Caco-2 (cell line): ENCODE measurements at regions of chrX and their contacts with region 1.

Region 1: GRCh38 chrX:72554448-72555140 is 18.0 kb downstream of the HDAC8 start:
- DNase-seq: peak; percentile 86 to 90
- H3K4me3 ChIP-seq: peak overlapping the region; percentile 28
- H3K4me3 Mint-ChIP-seq: peak overlapping the region; percentile 79
- H3K27ac Mint-ChIP-seq: peak overlapping the region; percentile 92
- H3K4me1 ChIP-seq: 0 out of 2 replicates have a peak, but pooled peaks cover 5% of the 10 kb centered on the region
- H3K4me1 Mint-ChIP-seq: peaks cover 9% of the 10 kb centered on the region
- H3K27me3 ChIP-seq: no peaks in the 10 kb centered on the region
- H3K27me3 Mint-ChIP-seq: no peaks in the 10 kb centered on the region
- CTCF ChIP-seq: peak; percentile 46 to 48

Region 2: DNA sequence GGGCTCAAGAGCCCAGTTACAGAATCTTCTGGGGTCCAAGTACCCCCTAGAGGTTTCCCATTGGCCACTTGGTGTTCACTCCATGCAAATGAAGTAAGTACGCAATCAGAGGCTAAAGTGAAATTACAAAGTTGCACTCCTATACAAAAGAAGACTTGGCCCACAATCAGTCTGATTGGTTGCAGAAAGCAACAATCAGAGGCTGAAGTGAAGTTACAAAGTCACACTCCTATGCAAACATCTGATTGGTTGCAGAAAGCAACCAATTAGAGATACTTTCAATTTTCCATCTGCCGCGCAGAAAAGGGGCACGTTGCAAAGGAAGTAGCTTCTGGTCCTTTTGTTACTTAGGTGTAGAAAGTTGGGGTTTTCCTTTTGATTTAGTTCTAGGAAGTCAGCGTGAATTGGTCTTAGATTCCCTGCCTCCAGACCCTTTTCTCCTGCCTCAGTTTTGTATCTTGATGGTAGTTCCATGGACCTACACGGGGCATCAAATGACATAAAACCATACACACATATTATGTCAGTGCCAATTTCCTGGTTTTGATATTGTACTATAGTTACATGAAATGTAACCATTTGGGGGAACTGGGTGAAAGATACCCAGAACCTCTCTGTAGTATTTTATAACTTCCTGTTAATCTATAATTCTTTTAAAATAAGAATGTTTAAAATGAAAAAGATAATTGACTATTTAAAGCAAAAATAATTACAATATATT is 385.4 kb before region 1 on chrX:
- CTCF ChIA-PET with region 1: no interaction called
- POLR2A ChIA-PET with region 1: no interaction called
- intact Hi-C with region 1: no loop called
- DNase-seq: no peak
- H3K4me3 ChIP-seq: no peak overlapping the region
- H3K4me3 Mint-ChIP-seq: no peak overlapping the region
- H3K27ac Mint-ChIP-seq: no peak overlapping the region
- H3K4me1 ChIP-seq: no peaks in the 10 kb centered on the region
- H3K4me1 Mint-ChIP-seq: no peaks in the 10 kb centered on the region
- H3K27me3 ChIP-seq: no peaks in the 10 kb centered on the region
- H3K27me3 Mint-ChIP-seq: no peaks in the 10 kb centered on the region
- CTCF ChIP-seq: no peak

Region 3: GRCh38 chrX:72306851-72307645 is 247.5 kb before region 1 on chrX:
- CTCF ChIA-PET with region 1: no interaction called
- POLR2A ChIA-PET with region 1: no interaction called
- intact Hi-C with region 1: loop called (anchors 5 kb)
- DNase-seq: peak; percentile 45 to 51
- H3K4me3 ChIP-seq: peak overlapping the region; percentile 57
- H3K4me3 Mint-ChIP-seq: peak overlapping the region; percentile 82
- H3K27ac Mint-ChIP-seq: no peak overlapping the region
- H3K4me1 ChIP-seq: no peaks in the 10 kb centered on the region
- H3K4me1 Mint-ChIP-seq: no peaks in the 10 kb centered on the region
- H3K27me3 ChIP-seq: peaks cover 1% of the 10 kb centered on the region
- H3K27me3 Mint-ChIP-seq: peaks cover 14% of the 10 kb centered on the region
- CTCF ChIP-seq: no peak

Region 4: GRCh38 chrX:72477781-72478181 is 76.8 kb before region 1 on chrX:
- CTCF ChIA-PET with region 1: no interaction called
- POLR2A ChIA-PET with region 1: no interaction called
- intact Hi-C with region 1: loop called (anchors 10 kb)
- DNase-seq: no peak
- H3K4me3 ChIP-seq: no peak overlapping the region
- H3K4me3 Mint-ChIP-seq: no peak overlapping the region
- H3K27ac Mint-ChIP-seq: no peak overlapping the region
- H3K4me1 ChIP-seq: peaks cover 13% of the 10 kb centered on the region
- H3K4me1 Mint-ChIP-seq: peaks cover 13% of the 10 kb centered on the region
- H3K27me3 ChIP-seq: no peaks in the 10 kb centered on the region
- H3K27me3 Mint-ChIP-seq: no peaks in the 10 kb centered on the region
- CTCF ChIP-seq: no peak

Region 5: DNA sequence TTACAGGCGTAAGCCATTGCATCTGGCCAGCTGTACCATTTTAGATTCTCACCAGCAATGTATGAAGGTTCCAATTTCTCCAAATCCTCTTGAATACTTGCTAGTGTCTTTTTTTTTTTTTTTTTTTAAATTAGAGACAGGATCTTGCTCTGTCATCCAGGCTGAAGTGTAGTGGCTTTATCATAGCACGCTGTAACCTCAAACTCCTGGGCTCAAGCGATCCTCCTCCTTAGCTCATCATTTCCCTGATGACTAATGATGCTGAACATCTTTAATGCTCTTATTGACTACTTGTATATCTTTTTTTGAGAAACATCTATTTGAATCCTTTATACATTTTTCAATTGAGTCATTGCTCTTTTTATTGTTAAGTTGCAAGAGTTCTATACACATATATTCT is 22.2 kb before region 1 on chrX:
- CTCF ChIA-PET with region 1: no interaction called
- POLR2A ChIA-PET with region 1: no interaction called
- intact Hi-C with region 1: no loop called
- DNase-seq: no peak
- H3K4me3 ChIP-seq: no peak overlapping the region
- H3K4me3 Mint-ChIP-seq: no peak overlapping the region
- H3K27ac Mint-ChIP-seq: no peak overlapping the region
- H3K4me1 ChIP-seq: no peaks in the 10 kb centered on the region
- H3K4me1 Mint-ChIP-seq: no peaks in the 10 kb centered on the region
- H3K27me3 ChIP-seq: no peaks in the 10 kb centered on the region
- H3K27me3 Mint-ChIP-seq: no peaks in the 10 kb centered on the region
- CTCF ChIP-seq: no peak

Region 6: DNA sequence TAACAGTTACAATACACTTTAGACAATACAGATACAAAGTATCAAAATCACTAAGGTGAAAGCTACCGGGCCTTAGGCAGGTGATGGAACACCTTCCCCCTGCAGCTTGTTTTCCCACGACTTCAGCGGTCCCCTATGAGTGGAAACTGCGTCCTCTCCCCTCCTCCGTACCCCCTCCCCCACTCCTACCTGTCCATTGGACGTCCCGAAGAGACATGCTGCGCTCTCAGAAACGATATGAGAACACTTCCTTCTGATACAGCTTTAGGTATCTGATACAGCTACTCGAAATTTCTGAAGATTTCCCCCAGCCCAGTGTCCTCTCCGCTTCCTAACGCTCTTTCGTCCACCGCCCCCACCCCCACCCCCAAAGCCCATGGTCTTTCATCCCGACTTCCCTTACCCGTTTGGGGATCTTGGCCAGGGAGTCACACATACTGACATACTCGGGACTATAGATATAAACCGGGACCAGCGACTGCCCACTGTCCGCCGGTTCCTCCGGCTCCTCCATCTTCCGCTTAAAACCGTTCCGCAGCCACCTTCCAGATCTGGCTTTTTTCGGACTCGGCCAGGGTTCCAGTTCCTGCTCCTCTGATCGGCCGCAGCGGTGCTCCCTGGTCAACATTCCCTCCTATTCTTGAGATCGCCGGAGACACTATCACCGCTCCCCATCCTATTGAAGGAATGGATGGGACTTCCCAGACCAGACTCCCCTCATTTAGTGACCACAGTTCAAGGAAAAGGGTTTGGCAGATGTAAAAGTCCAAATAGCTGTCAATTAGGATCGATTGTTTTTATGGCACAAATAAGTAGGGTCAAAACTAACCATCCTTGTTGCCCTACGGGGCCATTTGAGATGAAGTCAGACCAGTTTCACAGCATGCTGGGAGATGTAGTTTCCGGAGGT is 17.9 kb after region 1 on chrX and contains the start of gene HDAC8:
- CTCF ChIA-PET with region 1: interaction called, 4 read pairs
- POLR2A ChIA-PET with region 1: no interaction called
- intact Hi-C with region 1: loop called (anchors 1 kb)
- DNase-seq: peak; percentile 53 to 62
- H3K4me3 ChIP-seq: peak within 1 kb of the TSS; percentile 50
- H3K4me3 Mint-ChIP-seq: peak within 1 kb of the TSS; percentile 73
- H3K27ac Mint-ChIP-seq: peak within 1 kb of the TSS; percentile 4
- H3K4me1 ChIP-seq: no peaks in the 10 kb centered on the region
- H3K4me1 Mint-ChIP-seq: no peaks in the 10 kb centered on the region
- H3K27me3 ChIP-seq: no peaks in the 10 kb centered on the region
- H3K27me3 Mint-ChIP-seq: no peaks in the 10 kb centered on the region
- CTCF ChIP-seq: no peak
- total RNA-seq, gene HDAC8: 26.2 and 26.6 TPM in 2 replicates